Psoas muscle (tissue), 8 donors: ENCODE measurements at regions of chr9 and their contacts with region 1.

Region 1: GRCh38 chr9:99373912-99374311 is 151.8 kb downstream of the SEC61B start:
- DNase-seq: no peak
- ATAC-seq: no peak
- H3K4me3 ChIP-seq: no peak overlapping the region
- H3K27ac ChIP-seq: no peak overlapping the region
- H3K4me1 ChIP-seq: peaks cover 17% of the 10 kb centered on the region
- H3K27me3 ChIP-seq: no peaks in the 10 kb centered on the region
- CTCF ChIP-seq: no peak

Region 2: GRCh38 chr9:99421369-99421768 is 47.5 kb after region 1 on chr9:
- intact Hi-C with region 1: no loop called
- DNase-seq: no peak
- ATAC-seq: peak in 2 of 4 donors; percentile 49 to 69
- H3K4me3 ChIP-seq: no peak overlapping the region
- H3K27ac ChIP-seq: no peak overlapping the region
- H3K4me1 ChIP-seq: peaks cover 6% of the 10 kb centered on the region
- H3K27me3 ChIP-seq: peaks cover 0 to 1% (median 0%) of the 10 kb centered on the region in 3 donors
- CTCF ChIP-seq: no peak

Region 3: DNA sequence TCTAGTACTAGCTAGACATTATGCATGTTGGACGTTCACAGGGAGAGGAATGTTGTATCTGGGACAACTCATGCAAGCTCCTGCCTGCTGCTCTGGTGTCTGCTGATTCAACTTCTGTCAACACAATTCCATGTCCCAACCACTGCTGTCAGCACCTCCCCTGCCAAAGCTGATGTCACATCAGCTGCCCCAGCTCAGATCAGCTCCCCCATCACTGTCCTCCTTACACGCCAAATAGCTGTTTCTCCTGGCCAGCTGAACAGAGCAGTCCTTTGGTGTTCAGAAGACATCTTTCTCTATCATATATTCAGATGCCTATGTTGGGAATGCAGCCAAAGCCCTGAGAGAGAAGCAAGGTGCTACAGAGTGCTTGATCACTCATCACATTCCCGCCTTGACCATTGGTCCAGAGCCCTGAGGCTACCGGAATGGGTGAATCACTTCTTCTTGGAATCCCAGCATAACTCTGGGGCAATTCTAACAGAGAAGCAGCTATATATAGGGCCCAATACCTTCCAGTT is 71.5 kb after region 1 on chr9:
- intact Hi-C with region 1: loop called (anchors 2 to 5 kb)
- DNase-seq: peak; percentile 78 to 89
- ATAC-seq: peak; percentile 96 to 98 (median 96)
- H3K4me3 ChIP-seq: peak overlapping the region; percentile 8
- H3K27ac ChIP-seq: peak overlapping the region; percentile 86
- H3K4me1 ChIP-seq: peaks cover 20% of the 10 kb centered on the region
- H3K27me3 ChIP-seq: no peaks in the 10 kb centered on the region
- CTCF ChIP-seq: no peak